Thyroid gland (tissue), 4 donors: ENCODE measurements at regions of chrX and their contacts with region 1.

Region 1: DNA sequence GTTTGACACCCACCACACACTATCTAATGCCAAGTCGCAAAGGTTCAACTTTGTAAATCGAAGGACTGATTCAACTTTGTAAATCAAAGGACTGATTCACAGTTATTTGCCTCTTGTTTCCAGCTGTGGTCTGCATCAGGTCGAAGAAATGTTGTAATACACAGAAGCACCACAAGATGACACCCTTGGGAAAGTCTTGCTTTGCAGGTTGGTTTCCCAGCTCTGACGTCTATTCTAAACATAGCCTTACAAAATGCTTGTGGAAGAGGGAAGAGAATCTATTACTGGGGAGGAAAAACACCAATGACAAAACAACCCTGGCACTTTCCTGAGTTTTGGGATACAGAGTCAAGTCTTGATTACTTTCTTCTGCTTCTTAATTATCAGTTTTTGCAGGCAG is 35.3 kb downstream of the SUPT20HL1 start:
- DNase-seq: peak; percentile 23 to 26
- H3K4me3 ChIP-seq: no peak overlapping the region
- H3K27ac ChIP-seq: no peak overlapping the region
- H3K4me1 ChIP-seq: no peaks in the 10 kb centered on the region
- H3K27me3 ChIP-seq: no peaks in the 10 kb centered on the region
- CTCF ChIP-seq: peak in 5 of 6 experiments; percentile 58 to 89 (median 83)
- POLR2A ChIP-seq: no peak

Region 2: GRCh38 chrX:24357106-24357505 is 38.7 kb before region 1 on chrX:
- intact Hi-C with region 1: no loop called
- DNase-seq: no peak
- H3K4me3 ChIP-seq: no peak overlapping the region
- H3K27ac ChIP-seq: no peak overlapping the region
- H3K4me1 ChIP-seq: no peaks in the 10 kb centered on the region
- H3K27me3 ChIP-seq: no peaks in the 10 kb centered on the region
- CTCF ChIP-seq: no peak
- POLR2A ChIP-seq: no peak

Region 3: GRCh38 chrX:24498975-24499374 is 103.2 kb after region 1 on chrX:
- intact Hi-C with region 1: loop called (anchors 5 kb)
- DNase-seq: no peak
- H3K4me3 ChIP-seq: no peak overlapping the region
- H3K27ac ChIP-seq: no peak overlapping the region
- H3K4me1 ChIP-seq: no peaks in the 10 kb centered on the region
- H3K27me3 ChIP-seq: no peaks in the 10 kb centered on the region
- CTCF ChIP-seq: peak in 5 of 6 experiments; percentile 38 to 65 (median 46)
- POLR2A ChIP-seq: no peak

Region 4: GRCh38 chrX:24693453-24694202 is 297.9 kb after region 1 on chrX and contains the start of gene POLA1:
- intact Hi-C with region 1: loop called (anchors 10 kb)
- DNase-seq: peak; percentile 91 to 93
- H3K4me3 ChIP-seq: peak within 1 kb of the TSS in 2 of 3 donors; percentile 27 to 58
- H3K27ac ChIP-seq: peak within 1 kb of the TSS in 2 of 3 donors; percentile 46 to 49
- H3K4me1 ChIP-seq: peaks cover 0 to 3% of the 10 kb centered on the region in 2 donors
- H3K27me3 ChIP-seq: no peaks in the 10 kb centered on the region
- CTCF ChIP-seq: peak in 1 of 6 experiments; percentile 25
- POLR2A ChIP-seq: no peak
- total RNA-seq, gene POLA1: 8.5 to 18.9 (median 8.8) TPM